ENCODE measurements at regions of chr4 and their contacts with region 1.

Region 1: GRCh38 chr4:149987330-149988086 is 90.7 kb upstream of the DCLK2 start:
- DNase-seq: no peak
- ATAC-seq: no peak
- H3K4me3 ChIP-seq: no peak overlapping the region
- H3K4me3 Mint-ChIP-seq: no peak overlapping the region
- H3K27ac ChIP-seq: no peak overlapping the region
- H3K27ac Mint-ChIP-seq: no peak overlapping the region
- H3K4me1 ChIP-seq: no peaks in the 10 kb centered on the region
- H3K4me1 Mint-ChIP-seq: no peaks in the 10 kb centered on the region
- H3K27me3 ChIP-seq: no peaks in the 10 kb centered on the region
- H3K27me3 Mint-ChIP-seq: peaks cover 4% of the 10 kb centered on the region
- CTCF ChIP-seq: no peak

Region 2: GRCh38 chr4:150023489-150023888 is 36.0 kb after region 1 on chr4:
- CTCF ChIA-PET with region 1: no interaction called
- POLR2A ChIA-PET with region 1: no interaction called
- intact Hi-C with region 1: loop called in 1 of 2 experiments (anchors 2 kb)
- DNase-seq: no peak
- ATAC-seq: no peak
- H3K4me3 ChIP-seq: no peak overlapping the region
- H3K4me3 Mint-ChIP-seq: no peak overlapping the region
- H3K27ac ChIP-seq: no peak overlapping the region
- H3K27ac Mint-ChIP-seq: no peak overlapping the region
- H3K4me1 ChIP-seq: no peaks in the 10 kb centered on the region
- H3K4me1 Mint-ChIP-seq: no peaks in the 10 kb centered on the region
- H3K27me3 ChIP-seq: no peaks in the 10 kb centered on the region
- H3K27me3 Mint-ChIP-seq: peaks cover 6% of the 10 kb centered on the region
- CTCF ChIP-seq: no peak